ENCODE measurements at regions of chr3 and their contacts with region 1.

Region 1: GRCh38 chr3:188257384-188258026 is 103.5 kb downstream of the LPP start:
- DNase-seq: no peak
- H3K4me3 Mint-ChIP-seq: no peak overlapping the region
- H3K27ac Mint-ChIP-seq: peak overlapping the region; percentile 85
- H3K4me1 Mint-ChIP-seq: peaks cover 47% of the 10 kb centered on the region
- H3K27me3 Mint-ChIP-seq: no peaks in the 10 kb centered on the region

Region 2: DNA sequence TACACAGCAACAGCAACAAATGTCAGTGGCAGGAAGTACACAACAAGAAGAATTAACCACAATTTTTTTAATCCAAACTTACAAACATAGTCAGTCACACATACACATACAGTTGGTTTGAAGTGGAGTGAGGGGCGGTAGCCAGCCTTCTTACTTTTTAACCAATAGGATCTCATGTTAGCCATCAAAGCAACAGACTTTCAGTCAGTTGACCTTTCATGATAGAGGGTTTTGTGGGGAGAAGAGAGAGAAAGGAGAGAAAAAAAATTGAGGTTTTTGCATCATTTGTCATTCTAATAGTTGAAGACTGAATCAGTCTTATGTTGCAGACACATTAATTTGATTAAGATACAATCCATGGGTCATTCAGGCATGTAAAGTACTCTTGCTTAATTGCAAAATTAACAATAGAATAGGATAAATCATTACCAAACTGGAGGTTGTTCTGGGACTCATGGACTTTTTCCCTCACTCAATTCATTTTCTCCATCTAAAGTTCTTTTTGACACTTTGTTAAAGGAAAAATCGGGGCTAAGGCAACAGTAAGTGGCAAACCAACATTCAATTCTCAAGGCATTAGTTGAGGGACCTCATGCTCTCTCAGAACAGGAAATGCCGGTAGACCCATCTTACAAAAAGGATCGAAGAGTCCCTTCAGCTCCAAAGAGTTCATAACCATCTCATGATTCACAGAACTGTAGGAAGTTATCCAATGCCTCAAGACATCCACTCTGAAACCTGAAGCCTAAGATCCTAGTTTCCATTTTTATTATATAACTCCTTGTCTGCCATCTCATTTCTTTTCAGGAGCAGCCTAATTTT is 263.1 kb before region 1 on chr3:
- intact Hi-C with region 1: loop called (anchors 5 kb)
- DNase-seq: peak; percentile 75
- H3K4me3 Mint-ChIP-seq: peak overlapping the region; percentile 47
- H3K27ac Mint-ChIP-seq: peak overlapping the region; percentile 76
- H3K4me1 Mint-ChIP-seq: peaks cover 71% of the 10 kb centered on the region
- H3K27me3 Mint-ChIP-seq: no peaks in the 10 kb centered on the region

Region 3: DNA sequence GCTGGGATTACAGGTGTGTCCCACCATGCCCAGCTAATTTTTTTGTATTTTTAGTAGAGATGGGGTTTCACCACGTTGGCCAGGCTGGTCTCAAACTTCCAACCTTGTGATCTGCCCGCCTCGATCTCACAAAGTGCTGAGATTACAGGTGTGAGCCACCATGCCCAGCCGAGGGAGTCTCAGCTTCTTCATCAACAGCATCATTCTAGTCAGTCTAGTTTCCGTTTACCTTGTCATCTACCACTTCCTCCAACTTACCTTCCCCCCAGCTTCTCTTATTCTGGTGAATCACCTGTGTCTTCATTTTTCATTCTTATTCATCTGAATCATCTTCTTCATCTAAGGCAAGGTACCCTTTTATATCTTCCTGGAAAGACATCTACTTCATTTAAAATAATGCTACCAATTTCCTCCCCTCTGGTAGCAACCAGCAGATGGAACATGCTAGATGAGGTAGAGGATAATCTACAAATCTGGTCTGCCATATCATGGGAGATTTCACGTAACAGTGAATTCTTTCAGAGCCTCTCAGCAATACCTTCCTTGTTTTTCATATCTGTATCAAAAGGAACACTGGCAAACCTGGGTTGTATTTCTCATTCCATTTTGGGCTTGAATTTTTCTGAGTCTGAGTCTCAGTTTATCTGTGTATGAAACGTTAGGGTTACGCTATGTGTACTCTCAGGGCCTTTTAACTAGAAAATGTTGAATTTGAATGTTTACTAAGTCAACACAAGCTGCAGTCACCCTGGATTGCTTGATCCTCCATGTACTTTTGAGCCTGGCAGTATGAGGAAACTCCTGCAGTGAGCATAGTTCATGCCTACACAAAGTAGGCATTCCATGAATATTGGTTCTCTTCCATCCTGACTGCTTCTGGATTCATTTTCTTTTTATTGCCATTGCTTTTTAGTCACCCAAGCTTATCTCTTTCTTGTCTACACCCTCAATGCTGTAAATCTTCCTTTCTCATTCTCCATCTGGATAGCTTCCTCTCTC is 86.7 kb before region 1 on chr3:
- intact Hi-C with region 1: loop called (anchors 5 kb)
- DNase-seq: peak; percentile 79
- H3K4me3 Mint-ChIP-seq: peak overlapping the region; percentile 4
- H3K27ac Mint-ChIP-seq: peak overlapping the region; percentile 85
- H3K4me1 Mint-ChIP-seq: peaks cover 39% of the 10 kb centered on the region
- H3K27me3 Mint-ChIP-seq: no peaks in the 10 kb centered on the region

Region 4: GRCh38 chr3:188270423-188270972 is 13.0 kb after region 1 on chr3:
- intact Hi-C with region 1: no loop called
- DNase-seq: no peak
- H3K4me3 Mint-ChIP-seq: no peak overlapping the region
- H3K27ac Mint-ChIP-seq: no peak overlapping the region
- H3K4me1 Mint-ChIP-seq: peaks cover 32% of the 10 kb centered on the region
- H3K27me3 Mint-ChIP-seq: no peaks in the 10 kb centered on the region

Measured in activated CD4-positive, alpha-beta T cell treated with anti-CD3 and anti-CD28 coated beads, Interleukin-2, amount 10 ng/mL, durations not matched to agents 24 days and 14 days (primary cell).